HepG2 (cell line): ENCODE measurements at regions of chr17 and their contacts with region 1.

Region 1: GRCh38 chr17:7045909-7046724 is 2.2 kb upstream of the SLC16A11 start:
- DNase-seq: peak; percentile 80
- ATAC-seq: peak; percentile 72
- H3K4me3 ChIP-seq: peak overlapping the region; percentile 52 to 79 (median 61)
- H3K27ac ChIP-seq: peak overlapping the region; percentile 73
- H3K4me1 ChIP-seq: peaks cover 55% of the 10 kb centered on the region
- H3K27me3 ChIP-seq: no peaks in the 10 kb centered on the region; a peak in 1 of 5 replicates
- CTCF ChIP-seq: peak; percentile 84
- EP300 ChIP-seq: no peak
- POLR2A ChIP-seq: peak in 1 of 2 experiments; percentile 22; a peak in 1 of 4 replicates
- RAD21 ChIP-seq: peak; percentile 78

Region 2: DNA sequence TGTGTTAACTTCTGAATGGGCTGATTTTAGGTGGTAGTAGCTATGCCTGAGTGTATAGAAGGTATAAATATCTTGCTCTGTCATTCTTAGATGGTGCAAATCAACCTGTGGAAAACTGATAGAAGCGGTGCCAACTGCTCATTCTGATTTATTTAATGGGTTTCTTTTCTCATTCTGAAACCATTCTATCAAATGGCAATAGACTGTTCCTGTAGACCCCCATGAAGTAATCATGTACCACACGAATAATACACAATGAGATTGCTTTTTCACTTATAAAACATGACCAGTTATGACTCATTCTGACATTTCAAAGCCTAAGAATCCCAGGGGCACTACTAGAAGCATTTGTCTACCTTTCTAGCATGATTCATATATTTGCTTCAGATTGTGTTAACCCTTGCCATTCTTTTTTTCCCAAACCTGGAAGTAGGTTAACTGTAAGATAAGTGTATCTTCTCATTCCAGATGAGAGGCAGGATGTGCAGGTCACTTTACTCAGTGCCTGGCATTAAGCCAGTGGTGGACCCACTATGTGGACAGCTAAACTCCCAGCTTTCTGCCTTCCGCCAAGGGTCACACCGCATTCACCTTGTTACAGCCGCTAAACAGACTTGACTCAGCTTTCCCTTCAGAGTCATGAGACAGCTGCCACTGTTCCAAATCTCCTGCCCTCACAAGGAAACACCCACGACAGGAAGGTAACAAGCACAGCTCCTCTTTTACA is 14.2 kb after region 1 on chr17:
- CTCF ChIA-PET with region 1: no interaction called
- POLR2A ChIA-PET with region 1: no interaction called
- in situ Hi-C with region 1: no loop called
- intact Hi-C with region 1: no loop called
- DNase-seq: peak; percentile 59
- ATAC-seq: no peak
- H3K4me3 ChIP-seq: no peak overlapping the region
- H3K27ac ChIP-seq: no peak overlapping the region
- H3K4me1 ChIP-seq: peaks cover 9% of the 10 kb centered on the region
- H3K27me3 ChIP-seq: peaks cover 0 to 9% of the 10 kb centered on the region in 2 experiments; a peak in 1 of 5 replicates
- CTCF ChIP-seq: no peak
- EP300 ChIP-seq: no peak
- POLR2A ChIP-seq: no peak
- RAD21 ChIP-seq: no peak

Region 3: DNA sequence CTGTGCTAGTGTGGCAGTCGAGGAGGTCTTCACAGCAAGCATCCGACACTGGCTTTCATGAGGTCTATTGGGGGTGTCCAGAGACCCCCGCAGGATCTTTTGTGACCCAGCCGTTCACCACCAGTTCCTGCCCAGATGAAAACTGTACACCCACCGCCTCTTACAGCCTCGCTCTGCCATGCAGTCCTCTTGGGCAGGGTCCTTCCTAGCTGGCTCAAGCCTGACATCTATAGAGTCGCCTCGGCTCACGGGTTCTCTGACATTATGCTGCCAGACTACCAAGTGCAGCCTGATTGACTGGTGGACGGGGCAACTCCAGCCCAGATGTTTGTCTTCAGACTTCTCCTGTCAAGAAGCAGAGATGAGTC is 48.5 kb after region 1 on chr17:
- CTCF ChIA-PET with region 1: no interaction called
- POLR2A ChIA-PET with region 1: no interaction called
- in situ Hi-C with region 1: loop called (anchors 5 kb)
- intact Hi-C with region 1: no loop called
- DNase-seq: no peak
- ATAC-seq: peak; percentile 49
- H3K4me3 ChIP-seq: no peak overlapping the region
- H3K27ac ChIP-seq: no peak overlapping the region
- H3K4me1 ChIP-seq: peaks cover 9% of the 10 kb centered on the region
- H3K27me3 ChIP-seq: no peaks in the 10 kb centered on the region
- CTCF ChIP-seq: no peak
- EP300 ChIP-seq: no peak
- POLR2A ChIP-seq: no peak
- RAD21 ChIP-seq: no peak

Region 4: GRCh38 chr17:7136266-7136877 is 90.3 kb after region 1 on chr17:
- CTCF ChIA-PET with region 1: interaction called, 64 read pairs
- POLR2A ChIA-PET with region 1: interaction called, 16 read pairs
- in situ Hi-C with region 1: loop called (anchors 5 kb)
- intact Hi-C with region 1: no loop called
- DNase-seq: peak; percentile 63
- ATAC-seq: no peak
- H3K4me3 ChIP-seq: peak overlapping the region; percentile 24 to 50 (median 30)
- H3K27ac ChIP-seq: peak overlapping the region; percentile 66
- H3K4me1 ChIP-seq: peaks cover 70% of the 10 kb centered on the region
- H3K27me3 ChIP-seq: no peaks in the 10 kb centered on the region
- CTCF ChIP-seq: peak; percentile 81
- EP300 ChIP-seq: no peak
- POLR2A ChIP-seq: no peak
- RAD21 ChIP-seq: peak; percentile 89

Region 5: GRCh38 chr17:7177196-7177953 is 131.3 kb after region 1 on chr17:
- CTCF ChIA-PET with region 1: interaction called, 5 read pairs
- POLR2A ChIA-PET with region 1: interaction called, 38 read pairs
- in situ Hi-C with region 1: no loop called
- intact Hi-C with region 1: loop called (anchors 2 kb)
- DNase-seq: peak; percentile 72
- ATAC-seq: peak; percentile 49
- H3K4me3 ChIP-seq: peak overlapping the region; percentile 73 to 93 (median 84)
- H3K27ac ChIP-seq: peak overlapping the region; percentile 98
- H3K4me1 ChIP-seq: peaks cover 51% of the 10 kb centered on the region
- H3K27me3 ChIP-seq: no peaks in the 10 kb centered on the region; a peak in 1 of 5 replicates
- CTCF ChIP-seq: peak; percentile 90
- EP300 ChIP-seq: no peak
- POLR2A ChIP-seq: peak; percentile 13 to 38; a peak in 1 of 4 replicates
- RAD21 ChIP-seq: peak; percentile 80

Region 6: GRCh38 chr17:7214300-7215135 is 168.4 kb after region 1 on chr17:
- CTCF ChIA-PET with region 1: interaction called, 10 read pairs
- POLR2A ChIA-PET with region 1: interaction called, 9 read pairs
- in situ Hi-C with region 1: no loop called
- intact Hi-C with region 1: no loop called
- DNase-seq: peak; percentile 95
- ATAC-seq: peak; percentile 88
- H3K4me3 ChIP-seq: peak overlapping the region; percentile 29 to 68 (median 55)
- H3K27ac ChIP-seq: peak overlapping the region; percentile 53
- H3K4me1 ChIP-seq: peaks cover 56% of the 10 kb centered on the region
- H3K27me3 ChIP-seq: peaks cover 0 to 4% of the 10 kb centered on the region in 2 experiments; a peak in 2 of 5 replicates
- CTCF ChIP-seq: peak; percentile 79
- EP300 ChIP-seq: no peak
- POLR2A ChIP-seq: no peak
- RAD21 ChIP-seq: peak; percentile 56

Region 7: DNA sequence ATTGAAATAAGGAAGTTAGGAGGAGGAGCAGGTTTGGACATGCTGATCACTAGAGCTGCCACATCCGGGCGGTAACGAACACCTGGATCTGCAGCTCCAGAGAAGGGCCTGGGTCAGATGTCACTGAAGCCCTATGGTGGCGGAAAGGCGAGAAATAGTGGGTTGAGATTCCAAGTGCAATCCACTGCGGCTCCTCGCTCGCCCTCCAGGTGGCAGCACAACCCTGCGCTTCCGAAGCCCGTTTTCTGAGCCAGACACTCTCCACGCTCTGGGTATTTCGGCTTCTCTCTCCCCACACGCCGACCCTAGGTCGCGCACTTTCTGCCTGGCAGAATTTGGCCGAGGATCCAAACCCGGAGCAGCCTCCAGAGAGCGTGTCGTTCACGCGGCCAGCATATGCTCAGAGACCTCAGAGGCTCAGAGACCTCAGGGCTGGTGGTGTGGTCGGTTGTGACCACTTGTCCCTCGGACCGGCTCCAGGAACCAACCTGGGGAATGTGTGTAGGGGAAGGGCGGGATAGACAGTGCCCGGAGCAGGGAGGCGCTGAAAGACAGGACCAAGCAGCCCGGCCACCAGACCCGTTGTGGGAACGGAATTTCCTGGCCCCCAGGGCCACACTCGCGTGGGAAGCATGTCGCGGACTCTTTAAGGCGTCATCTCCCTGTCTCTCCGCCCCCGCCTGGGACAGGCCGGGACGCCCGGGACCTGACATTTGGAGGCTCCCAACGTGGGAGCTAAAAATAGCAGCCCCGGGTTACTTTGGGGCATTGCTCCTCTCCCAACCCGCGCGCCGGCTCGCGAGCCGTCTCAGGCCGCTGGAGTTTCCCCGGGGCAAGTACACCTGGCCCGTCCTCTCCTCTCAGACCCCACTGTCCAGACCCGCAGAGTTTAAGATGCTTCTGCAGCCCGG is 234.7 kb after region 1 on chr17:
- CTCF ChIA-PET with region 1: interaction called, 7 read pairs
- POLR2A ChIA-PET with region 1: interaction called, 5 read pairs
- in situ Hi-C with region 1: loop called (anchors 10 kb)
- intact Hi-C with region 1: no loop called
- DNase-seq: peak; percentile 79
- ATAC-seq: peak; percentile 72
- H3K4me3 ChIP-seq: peak overlapping the region; percentile 23 to 87 (median 31); a peak in 5 of 6 replicates
- H3K27ac ChIP-seq: peak overlapping the region; percentile 59
- H3K4me1 ChIP-seq: peaks cover 38% of the 10 kb centered on the region
- H3K27me3 ChIP-seq: no peaks in the 10 kb centered on the region
- CTCF ChIP-seq: peak; percentile 98
- EP300 ChIP-seq: no peak
- POLR2A ChIP-seq: no peak
- RAD21 ChIP-seq: peak; percentile 99